ENCODE measurements at regions of chr2 and their contacts with region 1.

Region 1: GRCh38 chr2:12293874-12294273 is 422.9 kb upstream of the TRIB2 start:
- DNase-seq: peak; percentile 15
- H3K4me3 Mint-ChIP-seq: no peak overlapping the region
- H3K27ac Mint-ChIP-seq: peak overlapping the region; percentile 64
- H3K4me1 Mint-ChIP-seq: peaks cover 54% of the 10 kb centered on the region
- H3K27me3 Mint-ChIP-seq: peaks cover 18% of the 10 kb centered on the region

Region 2: DNA sequence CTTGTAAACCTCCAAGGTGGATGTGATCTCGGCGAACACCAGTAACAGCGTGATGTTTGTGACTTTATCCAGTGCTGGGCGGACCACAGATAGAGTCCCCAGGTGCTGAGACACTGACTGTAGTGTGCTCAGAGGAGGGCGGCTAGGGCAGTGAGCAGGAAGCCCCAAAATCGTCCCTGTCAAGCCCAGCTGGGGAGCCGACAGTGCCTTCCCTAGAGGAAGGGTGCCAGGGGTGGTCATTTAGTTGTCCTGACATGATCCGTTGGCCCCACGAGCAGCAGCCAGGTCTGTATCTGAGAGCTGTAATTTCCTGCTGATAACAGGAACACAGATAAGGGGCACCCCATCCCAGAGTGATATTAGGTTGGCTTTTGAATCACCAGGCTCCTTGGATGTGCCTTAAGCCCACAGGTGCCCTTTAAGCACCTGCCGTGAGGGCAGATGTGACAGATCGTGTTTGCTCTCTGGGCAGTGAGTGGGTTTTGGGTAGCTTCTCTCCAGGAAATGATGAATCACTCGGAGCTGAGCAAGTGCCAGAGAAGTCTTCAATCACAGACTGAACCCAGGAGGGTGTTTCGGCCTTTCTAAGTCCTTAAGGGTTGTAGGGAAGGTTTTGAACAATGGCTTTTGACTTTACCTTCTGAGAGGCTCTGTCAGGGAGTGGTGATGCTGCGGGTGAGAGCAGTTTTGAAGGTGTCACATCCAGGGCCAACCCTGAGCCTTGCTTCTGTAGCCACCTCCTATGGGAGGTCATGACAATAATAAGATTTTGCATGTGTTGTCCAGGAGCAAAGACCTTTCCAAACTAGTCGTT is 539.8 kb before region 1 on chr2:
- intact Hi-C with region 1: loop called (anchors 10 kb)
- DNase-seq: peak; percentile 52
- H3K4me3 Mint-ChIP-seq: peak overlapping the region; percentile 74
- H3K27ac Mint-ChIP-seq: peak overlapping the region; percentile 93
- H3K4me1 Mint-ChIP-seq: peaks cover 75% of the 10 kb centered on the region
- H3K27me3 Mint-ChIP-seq: no peaks in the 10 kb centered on the region

Region 3: DNA sequence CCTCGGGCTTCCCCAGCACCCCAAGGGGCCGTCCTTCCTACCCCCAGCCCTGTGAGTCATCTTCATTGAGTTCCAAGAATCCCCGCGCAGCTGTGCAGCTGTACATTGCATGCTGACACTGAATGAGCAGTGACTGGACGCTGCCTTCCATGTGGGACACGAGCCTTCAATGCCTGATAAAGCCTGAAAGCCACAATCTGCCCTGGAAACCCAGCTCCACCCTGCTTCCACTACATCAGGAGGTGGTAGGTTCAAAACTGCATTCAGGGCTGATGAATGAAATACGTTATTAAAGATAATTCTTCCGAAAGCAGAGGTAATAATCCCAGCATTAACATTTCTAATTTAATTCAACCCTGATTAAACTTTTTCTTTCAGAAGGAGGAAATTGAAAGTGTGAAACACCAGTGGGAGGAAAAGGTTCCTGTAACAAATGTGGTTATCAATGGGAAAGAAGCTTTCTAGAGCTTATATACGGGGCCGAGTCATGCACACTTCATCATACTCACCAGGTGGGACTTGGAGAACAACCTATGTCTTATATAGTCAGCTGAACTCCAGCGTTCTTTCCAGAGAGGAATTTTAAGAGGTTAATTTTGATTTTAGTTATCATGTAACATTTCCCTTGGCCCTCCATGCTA is 187.3 kb before region 1 on chr2:
- intact Hi-C with region 1: loop called (anchors 2 kb)
- DNase-seq: no peak
- H3K4me3 Mint-ChIP-seq: no peak overlapping the region
- H3K27ac Mint-ChIP-seq: no peak overlapping the region
- H3K4me1 Mint-ChIP-seq: peaks cover 11% of the 10 kb centered on the region
- H3K27me3 Mint-ChIP-seq: peaks cover 13% of the 10 kb centered on the region

Region 4: DNA sequence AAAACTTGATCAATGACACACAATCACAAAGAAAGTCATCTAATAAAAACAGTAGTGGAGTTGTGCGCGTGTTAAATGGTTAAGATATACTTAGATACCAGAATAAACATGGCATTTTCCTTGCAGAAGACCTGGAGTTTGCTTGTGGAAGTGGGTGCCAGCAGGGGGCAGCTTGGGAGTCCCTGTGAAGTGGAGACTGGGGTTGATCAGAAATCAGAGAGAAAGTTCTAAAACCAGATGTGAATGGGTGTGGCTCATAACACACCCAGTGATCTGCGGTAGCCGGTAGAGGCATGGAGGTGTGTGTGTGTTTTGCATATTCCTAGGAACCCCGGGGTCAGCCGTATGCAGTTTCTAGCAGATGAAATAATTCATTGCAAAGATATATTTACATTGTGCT is 122.7 kb after region 1 on chr2:
- intact Hi-C with region 1: loop called (anchors 5 kb)
- DNase-seq: peak; percentile 54
- H3K4me3 Mint-ChIP-seq: no peak overlapping the region
- H3K27ac Mint-ChIP-seq: no peak overlapping the region
- H3K4me1 Mint-ChIP-seq: peaks cover 59% of the 10 kb centered on the region
- H3K27me3 Mint-ChIP-seq: no peaks in the 10 kb centered on the region

Region 5: DNA sequence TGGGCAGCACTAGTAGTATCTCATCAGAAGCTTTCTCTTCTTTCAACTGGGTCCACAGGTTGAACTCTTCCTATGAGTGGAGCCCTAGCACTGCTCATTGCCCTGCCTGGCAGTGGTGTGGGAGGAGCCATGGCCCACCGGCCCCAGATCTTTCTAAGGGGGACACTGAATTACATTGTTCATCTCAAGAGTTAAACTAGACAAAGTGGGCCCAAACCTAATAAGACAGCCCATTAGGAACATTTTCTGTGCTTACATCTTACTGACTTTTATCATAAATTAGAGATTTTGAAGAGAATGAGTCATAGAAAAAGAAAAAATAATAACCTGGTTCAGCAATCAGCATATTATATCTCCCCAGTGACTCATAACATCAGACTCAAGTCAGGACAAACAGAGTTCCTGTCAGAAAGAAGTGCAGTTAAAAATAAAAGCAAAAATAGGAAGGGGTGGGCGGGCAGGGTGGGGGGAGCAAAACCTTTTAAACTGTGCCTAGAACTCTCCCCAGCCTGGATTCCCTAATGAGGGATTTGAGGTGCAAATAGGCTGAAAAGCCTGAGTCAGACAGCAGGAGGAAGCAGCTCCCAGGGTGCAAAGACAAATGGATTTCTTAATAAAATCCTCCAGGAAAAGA is 261.3 kb after region 1 on chr2:
- intact Hi-C with region 1: loop called (anchors 2 kb)
- DNase-seq: no peak
- H3K4me3 Mint-ChIP-seq: peak overlapping the region; percentile 14
- H3K27ac Mint-ChIP-seq: peak overlapping the region; percentile 85
- H3K4me1 Mint-ChIP-seq: peaks cover 42% of the 10 kb centered on the region
- H3K27me3 Mint-ChIP-seq: no peaks in the 10 kb centered on the region

Region 6: GRCh38 chr2:12579018-12579417 is 285.1 kb after region 1 on chr2:
- intact Hi-C with region 1: no loop called
- DNase-seq: no peak
- H3K4me3 Mint-ChIP-seq: no peak overlapping the region
- H3K27ac Mint-ChIP-seq: no peak overlapping the region
- H3K4me1 Mint-ChIP-seq: peaks cover 2% of the 10 kb centered on the region
- H3K27me3 Mint-ChIP-seq: peaks cover 2% of the 10 kb centered on the region

Region 7: DNA sequence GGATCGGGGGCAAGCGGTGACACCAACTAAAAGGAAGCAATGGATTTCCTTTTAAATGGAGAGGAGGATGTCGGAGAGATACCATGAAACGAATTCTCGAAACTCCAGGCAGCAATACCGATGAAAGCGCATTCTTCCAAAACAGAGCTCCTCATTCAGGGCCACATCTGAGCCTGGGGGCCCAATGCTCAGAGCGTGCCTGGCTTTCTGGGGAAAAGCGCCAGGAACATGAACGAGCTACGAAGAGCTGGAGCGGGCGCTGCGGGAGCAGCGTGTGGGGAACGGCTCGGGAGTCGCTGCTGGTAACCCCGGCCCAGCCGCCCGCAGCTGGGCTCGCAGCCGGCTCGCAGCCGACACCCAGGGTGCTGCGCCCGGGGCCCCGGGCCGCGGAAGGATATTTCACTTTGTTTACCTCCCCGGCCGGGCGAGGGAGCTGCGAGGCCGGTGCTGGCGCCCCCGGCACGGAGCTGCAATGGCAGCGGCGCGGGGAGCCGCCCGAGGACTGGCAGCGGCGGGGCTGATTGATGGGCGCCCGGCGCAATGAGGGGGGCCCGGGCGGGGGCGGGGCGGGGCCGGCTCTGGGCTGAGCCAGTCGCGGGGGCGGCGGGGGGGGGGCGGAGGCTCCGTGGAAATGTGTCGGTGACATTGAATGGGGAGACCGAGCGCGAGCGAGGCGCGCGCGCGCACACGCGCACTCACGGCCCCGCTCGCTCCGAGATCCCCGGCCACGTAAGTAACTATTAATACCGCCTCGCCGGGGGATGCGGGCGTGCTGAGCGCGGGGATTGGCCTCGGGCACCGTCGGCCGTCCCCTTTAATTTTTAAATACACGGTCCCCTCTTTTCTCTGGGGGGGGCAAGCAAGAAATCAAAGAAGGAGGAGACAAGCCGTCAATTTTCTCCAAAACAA is 422.7 kb after region 1 on chr2 and contains the start of gene TRIB2:
- intact Hi-C with region 1: loop called (anchors 2 kb)
- DNase-seq: peak; percentile 83
- H3K4me3 Mint-ChIP-seq: peak within 1 kb of the TSS; percentile 97
- H3K27ac Mint-ChIP-seq: peak within 1 kb of the TSS; percentile 78
- H3K4me1 Mint-ChIP-seq: peaks cover 45% of the 10 kb centered on the region
- H3K27me3 Mint-ChIP-seq: peaks cover 17% of the 10 kb centered on the region
- total RNA-seq, gene TRIB2: 3.9 TPM in 2 replicates

Region 8: DNA sequence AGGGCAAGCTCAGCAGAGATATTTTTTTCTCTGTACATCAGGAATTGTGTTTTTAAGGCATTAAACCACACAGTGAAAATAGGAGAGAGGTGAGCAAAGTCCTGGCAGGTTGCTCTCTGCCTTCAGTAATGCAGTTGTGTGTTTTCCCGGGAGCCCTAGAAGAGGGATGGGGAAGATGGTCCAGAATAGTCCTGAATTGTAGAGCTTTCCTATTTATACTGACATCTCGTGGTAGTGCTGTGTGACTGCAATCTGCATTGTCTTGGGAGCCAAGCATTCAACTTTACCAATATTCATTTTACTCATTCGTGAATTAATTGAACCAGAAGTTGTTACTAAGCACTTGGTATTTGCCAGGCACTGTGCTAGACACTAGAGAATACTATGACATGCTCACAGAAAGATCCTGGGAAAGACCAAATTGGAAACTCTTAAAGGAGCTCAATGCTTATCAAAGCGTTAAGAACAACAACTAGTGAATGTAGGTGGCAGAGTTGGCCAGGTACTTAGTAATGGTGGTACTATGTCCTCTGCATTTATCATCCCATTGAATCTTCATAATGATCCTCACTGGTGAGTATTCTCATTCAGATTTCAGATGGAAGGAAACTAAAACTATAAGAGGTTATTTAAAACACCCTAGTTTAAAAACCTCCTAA is 637.4 kb after region 1 on chr2:
- intact Hi-C with region 1: loop called (anchors 2 kb)
- DNase-seq: no peak
- H3K4me3 Mint-ChIP-seq: no peak overlapping the region
- H3K27ac Mint-ChIP-seq: no peak overlapping the region
- H3K4me1 Mint-ChIP-seq: peaks cover 12% of the 10 kb centered on the region
- H3K27me3 Mint-ChIP-seq: peaks cover 47% of the 10 kb centered on the region

Measured in activated T-helper 2 cell treated with anti-CD3 and anti-CD28 coated beads, Interferon-gamma antibody, Interleukin-2, Interleukin-4, amounts not matched to agents 10 μg/mL and 5 μg/mL and 100 μg/mL, durations not matched to agents 14 hours and 24 hours and 36 hours (primary cell).